IMR-90 (cell line): ENCODE measurements at regions of chr12 and their contacts with region 1.

Region 1: DNA sequence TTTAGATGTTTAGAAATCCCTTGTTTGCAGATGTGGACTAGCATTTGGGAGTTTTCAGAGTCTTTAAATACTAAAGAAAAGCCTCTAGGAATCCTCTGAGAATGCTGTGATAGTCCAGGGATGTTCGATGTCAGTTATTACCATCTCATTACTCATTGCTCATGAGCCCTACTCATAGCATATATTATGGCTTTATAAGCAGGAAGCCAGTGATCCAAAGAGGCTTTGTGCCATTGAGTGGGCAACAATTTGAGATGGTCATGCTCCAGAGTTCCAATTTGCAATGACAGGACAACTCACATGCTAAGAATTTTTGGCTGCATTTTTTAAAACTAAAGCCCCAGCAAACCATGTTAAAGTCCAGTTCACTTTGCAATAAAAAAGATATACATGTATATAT is 163.0 kb downstream of the OTOGL start:
- DNase-seq: peak; percentile 26
- ATAC-seq: no peak
- H3K4me3 ChIP-seq: no peak overlapping the region
- H3K27ac ChIP-seq: no peak overlapping the region
- H3K4me1 ChIP-seq: peaks cover 2% of the 10 kb centered on the region
- H3K27me3 ChIP-seq: no peaks in the 10 kb centered on the region
- CTCF ChIP-seq: no peak
- POLR2A ChIP-seq: no peak
- RAD21 ChIP-seq: no peak

Region 2: GRCh38 chr12:79381248-79382208 is 880.8 kb before region 1 on chr12:
- CTCF ChIA-PET with region 1: no interaction called
- POLR2A ChIA-PET with region 1: no interaction called
- dilution Hi-C with region 1: no loop called
- in situ Hi-C with region 1: no loop called
- intact Hi-C with region 1: no loop called
- DNase-seq: no peak
- ATAC-seq: no peak
- H3K4me3 ChIP-seq: no peak overlapping the region
- H3K27ac ChIP-seq: no peak overlapping the region
- H3K4me1 ChIP-seq: 0 out of 2 replicates have a peak, but pooled peaks cover 2% of the 10 kb centered on the region
- H3K27me3 ChIP-seq: no peaks in the 10 kb centered on the region
- CTCF ChIP-seq: no peak
- POLR2A ChIP-seq: no peak
- RAD21 ChIP-seq: no peak

Region 3: GRCh38 chr12:80205960-80206359 is 56.4 kb before region 1 on chr12:
- CTCF ChIA-PET with region 1: no interaction called
- POLR2A ChIA-PET with region 1: no interaction called
- dilution Hi-C with region 1: no loop called
- in situ Hi-C with region 1: loop called (anchors 5 kb)
- intact Hi-C with region 1: loop called (anchors 2 kb)
- DNase-seq: no peak
- ATAC-seq: no peak
- H3K4me3 ChIP-seq: no peak overlapping the region
- H3K27ac ChIP-seq: no peak overlapping the region
- H3K4me1 ChIP-seq: no peaks in the 10 kb centered on the region
- H3K27me3 ChIP-seq: no peaks in the 10 kb centered on the region
- CTCF ChIP-seq: no peak
- POLR2A ChIP-seq: no peak
- RAD21 ChIP-seq: no peak

Region 4: GRCh38 chr12:80226576-80226975 is 35.8 kb before region 1 on chr12:
- CTCF ChIA-PET with region 1: interaction called, 3 read pairs
- POLR2A ChIA-PET with region 1: no interaction called
- dilution Hi-C with region 1: no loop called
- in situ Hi-C with region 1: no loop called
- intact Hi-C with region 1: loop called (anchors 5 kb)
- DNase-seq: peak; percentile 68
- ATAC-seq: no peak
- H3K4me3 ChIP-seq: no peak overlapping the region
- H3K27ac ChIP-seq: no peak overlapping the region
- H3K4me1 ChIP-seq: no peaks in the 10 kb centered on the region
- H3K27me3 ChIP-seq: no peaks in the 10 kb centered on the region
- CTCF ChIP-seq: no peak
- POLR2A ChIP-seq: no peak
- RAD21 ChIP-seq: no peak

Region 5: DNA sequence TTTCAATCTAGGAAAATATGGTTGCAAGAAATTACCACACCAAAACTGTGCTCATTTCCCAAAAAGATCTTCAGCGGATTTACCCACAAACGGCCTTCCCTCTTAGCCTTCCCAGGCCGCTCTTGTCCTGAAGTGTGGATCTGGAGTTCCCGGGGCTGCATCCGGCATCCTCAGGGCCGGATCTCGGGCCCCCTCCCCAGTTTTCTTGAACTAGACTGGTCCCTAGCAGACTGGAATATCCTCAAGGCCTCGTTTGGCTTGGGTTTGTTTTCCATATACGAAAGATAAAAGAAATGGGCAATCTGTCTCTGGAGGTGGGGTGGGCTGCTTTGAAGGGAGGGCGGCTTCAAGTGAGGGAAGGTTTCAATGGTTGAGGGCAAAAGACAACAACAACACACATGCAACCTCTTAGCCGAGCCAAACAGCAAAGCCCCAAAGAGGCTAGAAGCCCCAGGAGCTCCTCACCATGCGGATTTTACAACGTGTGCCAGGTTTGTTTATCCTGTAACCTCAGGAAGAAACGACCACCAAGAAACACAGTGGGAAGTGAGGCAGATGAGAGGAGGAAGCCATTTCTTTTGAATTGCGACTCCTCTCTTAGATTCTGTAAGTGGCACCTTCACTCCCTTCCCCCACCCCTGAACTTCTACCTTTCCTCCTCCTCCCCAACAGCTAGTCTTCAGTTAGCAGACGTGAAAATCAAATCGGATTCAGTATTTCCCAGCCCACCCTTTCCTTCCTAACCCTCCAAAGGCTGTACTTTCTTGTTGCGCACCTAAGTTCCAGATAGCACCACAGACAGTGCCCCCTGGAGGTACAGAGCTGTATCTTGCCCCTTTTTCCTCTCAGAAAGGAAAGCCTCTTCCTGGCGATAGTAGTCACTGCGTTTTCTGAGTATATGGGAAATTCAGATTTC is 447.7 kb after region 1 on chr12:
- CTCF ChIA-PET with region 1: no interaction called
- POLR2A ChIA-PET with region 1: no interaction called
- dilution Hi-C with region 1: no loop called
- in situ Hi-C with region 1: no loop called
- intact Hi-C with region 1: no loop called
- DNase-seq: no peak
- ATAC-seq: no peak
- H3K4me3 ChIP-seq: no peak overlapping the region
- H3K27ac ChIP-seq: no peak overlapping the region
- H3K4me1 ChIP-seq: no peaks in the 10 kb centered on the region
- H3K27me3 ChIP-seq: no peaks in the 10 kb centered on the region
- CTCF ChIP-seq: no peak
- POLR2A ChIP-seq: no peak
- RAD21 ChIP-seq: no peak